Dorsolateral prefrontal cortex (tissue), 120 donors: ENCODE measurements at regions of chr4 and their contacts with region 1.

Region 1: DNA sequence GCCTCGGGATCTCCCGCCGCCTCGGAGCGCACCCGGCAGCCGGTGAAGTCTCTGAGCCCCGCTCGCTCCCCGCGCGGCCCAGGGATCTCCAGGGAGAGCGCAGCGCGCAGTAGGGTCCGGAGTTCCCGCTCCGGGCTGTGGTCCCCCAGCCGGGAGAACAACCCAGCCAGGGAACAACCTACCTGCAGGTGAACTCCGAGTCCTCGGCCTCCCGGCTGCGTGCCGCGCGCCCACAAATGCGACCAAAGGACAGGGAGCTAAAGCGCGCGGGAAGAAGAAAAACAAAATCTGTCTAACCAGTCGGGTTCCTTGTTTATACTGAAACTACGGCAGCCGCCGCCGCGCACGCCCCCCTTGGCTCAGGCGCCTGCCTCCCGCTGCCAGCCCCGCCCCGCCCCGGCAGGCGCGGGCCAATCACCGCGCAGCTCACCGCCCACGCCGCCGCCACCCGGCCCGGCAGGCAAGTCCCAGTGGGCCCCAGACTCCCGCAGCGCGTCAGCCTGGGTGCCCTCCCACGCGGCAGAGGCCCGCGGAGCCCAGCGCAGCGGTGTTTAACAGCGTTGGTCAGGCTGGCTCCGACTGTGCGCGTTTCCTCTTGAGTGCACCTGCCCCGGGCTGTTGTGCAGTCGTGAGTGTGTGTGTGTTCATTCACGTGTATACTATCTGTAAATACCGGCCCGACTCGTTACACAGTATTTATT is at the start of gene RASGEF1B:
- DNase-seq: peak; percentile 57 to 97 (median 91)
- H3K4me3 ChIP-seq: peak within 1 kb of the TSS; percentile 60 to 98 (median 90)
- H3K27ac ChIP-seq: peak within 1 kb of the TSS; percentile 49 to 97 (median 93)
- H3K27me3 ChIP-seq: no peaks in the 10 kb centered on the region
- CTCF ChIP-seq: peak in 18 of 56 donors; percentile 3 to 45 (median 20)
- total RNA-seq, gene RASGEF1B: 8.3 to 27.8 (median 17.8) TPM

Region 2: DNA sequence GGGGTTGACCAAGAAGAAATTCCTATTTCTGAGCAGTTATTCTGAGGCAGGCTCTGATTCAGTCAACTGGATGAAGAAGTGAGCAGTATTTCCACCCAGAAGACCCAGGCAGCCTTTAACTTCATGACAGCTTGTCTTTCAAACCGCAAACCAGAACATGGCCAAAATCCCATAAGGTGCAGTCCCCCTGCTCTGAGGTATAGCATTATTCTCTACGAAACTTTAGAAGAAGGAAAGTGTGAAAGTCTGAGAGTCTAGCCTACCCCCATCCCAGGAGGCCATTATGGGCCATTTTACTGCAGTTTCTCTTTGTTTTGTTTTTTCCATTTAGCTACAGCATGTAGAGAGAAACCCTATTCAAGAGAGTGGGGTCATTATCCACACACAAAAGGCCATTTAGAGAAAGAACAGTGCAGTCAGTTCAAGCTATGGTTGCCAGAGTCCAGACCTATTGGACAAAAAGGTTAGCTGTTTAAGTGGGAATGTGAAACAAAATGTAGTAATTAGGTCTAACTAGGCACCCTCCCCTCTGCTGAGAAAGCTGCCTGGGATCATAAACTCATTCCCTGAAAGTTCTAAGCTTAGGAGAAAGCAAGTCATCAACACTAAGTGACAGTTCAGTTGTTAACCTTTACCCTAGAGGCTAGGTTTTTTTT is 52.1 kb after region 1 on chr4:
- intact Hi-C with region 1: loop called in 1 of 2 experiments (anchors 2 kb)
- DNase-seq: no peak
- H3K4me3 ChIP-seq: peak overlapping the region in 12 of 59 donors; percentile 5 to 46 (median 14)
- H3K27ac ChIP-seq: peak overlapping the region in 55 of 59 donors; percentile 1 to 93 (median 72)
- H3K27me3 ChIP-seq: no peaks in the 10 kb centered on the region
- CTCF ChIP-seq: peak in 6 of 56 donors; percentile 4 to 22 (median 15)

Region 3: DNA sequence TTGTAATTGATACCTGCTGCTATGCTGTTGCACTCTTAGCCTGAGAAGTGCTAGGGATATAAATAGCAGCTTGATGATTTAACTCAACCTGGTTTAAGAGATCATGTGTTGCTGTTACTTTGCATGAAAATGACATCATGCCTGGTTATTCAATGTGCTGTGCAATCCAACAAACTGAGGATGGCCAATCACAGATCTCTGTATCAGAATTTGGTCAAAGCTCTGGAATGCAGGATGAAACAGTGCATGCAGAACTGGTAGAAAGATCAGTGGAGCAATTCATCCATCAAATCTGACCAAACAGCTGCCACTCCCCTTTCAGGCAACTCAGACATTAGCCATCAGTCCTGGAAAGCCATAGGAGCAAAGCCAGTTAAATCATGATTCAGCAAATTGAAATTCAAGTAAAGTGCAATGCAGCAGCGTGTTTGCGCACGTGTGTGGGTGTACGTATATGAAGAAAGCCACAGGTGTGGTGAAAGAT is 160.3 kb after region 1 on chr4:
- intact Hi-C with region 1: loop called in 1 of 2 experiments (anchors 5 kb)
- DNase-seq: no peak
- H3K4me3 ChIP-seq: no peak overlapping the region
- H3K27ac ChIP-seq: peak overlapping the region in 1 of 59 donors; percentile 16
- H3K27me3 ChIP-seq: no peaks in the 10 kb centered on the region
- CTCF ChIP-seq: no peak

Region 4: DNA sequence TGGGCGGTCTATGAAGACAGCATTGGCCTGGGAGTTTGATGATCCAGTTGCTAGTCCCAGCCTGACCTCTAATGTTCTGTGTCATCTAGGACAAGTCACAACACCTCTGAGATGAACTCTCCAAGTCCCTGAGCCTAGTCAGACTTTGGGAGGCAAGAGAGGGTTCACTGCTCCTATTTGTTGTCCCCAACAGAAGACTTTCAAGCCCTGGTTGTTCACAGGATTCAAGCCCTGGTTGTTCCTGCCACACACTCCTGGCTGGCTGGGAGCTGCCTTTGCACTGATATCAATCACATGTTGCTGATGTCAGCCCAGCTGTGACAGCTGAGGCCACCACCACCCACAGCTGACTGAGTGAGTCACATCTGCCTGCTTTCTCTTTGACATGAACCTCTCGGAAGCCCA is 253.2 kb after region 1 on chr4:
- intact Hi-C with region 1: loop called (anchors 2 to 10 kb)
- DNase-seq: peak in 9 of 10 donors; percentile 48 to 82 (median 68)
- H3K4me3 ChIP-seq: peak overlapping the region in 21 of 59 donors; percentile 2 to 45 (median 23)
- H3K27ac ChIP-seq: peak overlapping the region in 56 of 59 donors; percentile 1 to 87 (median 73)
- H3K27me3 ChIP-seq: peaks cover 0 to 2% (median 0%) of the 10 kb centered on the region in 45 donors
- CTCF ChIP-seq: peak in 21 of 56 donors; percentile 7 to 55 (median 25)

Region 5: DNA sequence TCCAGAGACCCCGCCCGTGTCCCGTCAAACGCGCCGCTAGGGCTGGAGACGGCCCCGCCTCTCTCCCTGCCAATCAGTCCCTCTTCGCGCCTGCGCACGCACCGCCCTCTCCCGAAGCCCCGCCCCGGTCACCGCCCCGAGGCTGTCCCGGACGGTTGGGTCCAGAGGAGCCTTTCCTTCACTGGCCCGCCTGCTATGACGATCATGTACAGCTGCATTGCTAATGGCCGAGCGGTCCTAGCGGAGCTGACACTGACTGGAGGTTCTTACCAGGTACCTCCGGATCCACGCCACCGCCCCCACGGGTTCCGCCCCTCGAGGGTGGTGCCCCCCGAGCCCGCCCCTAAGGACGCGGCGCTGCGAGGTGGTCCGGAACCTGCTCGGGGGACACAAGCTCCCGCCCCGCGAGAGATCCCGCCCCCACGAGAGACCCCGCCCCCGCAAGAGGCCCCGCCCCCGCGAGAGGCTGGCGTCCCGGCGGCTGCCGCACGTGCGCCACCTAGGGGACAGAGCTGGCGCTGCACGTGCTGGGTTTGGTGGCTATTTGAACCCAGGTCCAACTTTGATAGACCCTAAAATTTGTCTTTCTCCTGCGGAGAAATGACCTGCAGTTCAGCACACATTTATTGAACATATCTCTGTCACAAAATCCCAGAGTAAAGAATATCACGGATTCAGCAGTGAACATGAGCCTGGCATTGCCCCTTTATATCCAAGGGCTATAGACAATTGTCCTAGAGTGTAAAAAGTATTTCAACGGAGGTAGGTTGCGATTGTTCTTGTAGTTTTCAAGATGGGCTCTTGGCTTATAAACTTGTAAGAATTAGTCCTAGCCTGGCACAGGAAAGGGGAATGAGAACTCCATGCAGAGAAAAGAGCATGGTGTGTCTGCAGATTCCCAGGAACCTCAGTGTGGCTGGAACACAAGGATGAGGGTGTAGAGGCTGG is 813.4 kb after region 1 on chr4:
- intact Hi-C with region 1: loop called in 1 of 2 experiments (anchors 10 kb)
- DNase-seq: peak; percentile 89 to 100 (median 99)
- H3K4me3 ChIP-seq: peak overlapping the region; percentile 42 to 77 (median 65)
- H3K27ac ChIP-seq: peak overlapping the region in 51 of 59 donors; percentile 1 to 89 (median 73)
- H3K27me3 ChIP-seq: no peaks in the 10 kb centered on the region
- CTCF ChIP-seq: peak; percentile 66 to 95 (median 87)